Right ventricle myocardium superior (tissue), 1 donor: ENCODE measurements at regions of chr3 and their contacts with region 1.

Region 1: DNA sequence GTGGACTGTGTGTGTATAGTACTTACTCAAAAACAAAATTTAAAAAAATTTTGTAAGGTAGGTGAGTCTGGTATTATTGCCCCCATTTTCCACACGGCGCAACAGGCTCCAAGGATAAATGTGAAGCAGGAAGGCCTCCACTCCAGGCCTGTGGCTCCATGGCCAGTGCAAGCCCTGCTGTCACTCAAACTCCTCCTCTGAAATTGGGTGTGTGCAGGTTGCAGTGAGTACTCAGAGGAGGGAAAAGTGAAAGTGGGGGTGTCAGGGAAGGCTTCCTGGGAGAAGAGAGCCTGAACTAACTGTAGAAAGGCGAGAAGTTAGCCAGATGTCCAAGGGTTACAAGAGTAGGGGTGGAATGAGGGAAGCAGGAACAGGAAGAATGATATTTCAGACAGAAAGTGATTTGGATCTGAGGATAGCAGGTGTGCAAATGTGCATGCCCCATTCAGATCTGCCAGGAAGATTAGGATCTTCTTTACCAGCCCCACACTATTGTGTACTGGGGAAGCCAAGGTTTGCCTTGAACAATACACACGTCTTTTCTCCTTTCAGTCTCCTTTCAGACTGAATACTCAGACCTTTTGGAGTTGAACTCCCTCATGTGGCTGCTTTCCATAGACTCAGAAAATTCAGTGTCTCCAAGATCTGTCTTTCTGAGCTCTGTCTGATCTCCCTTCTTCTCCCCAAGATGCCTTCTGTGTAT is 48.7 kb upstream of the RYK start:
- DNase-seq: no peak
- ATAC-seq: peak; percentile 66

Region 2: GRCh38 chr3:134250717-134251220 is 48.6 kb before region 1 on chr3 and contains the start of gene RYK:
- intact Hi-C with region 1: loop called (anchors 5 kb)
- DNase-seq: peak; percentile 91
- ATAC-seq: peak; percentile 95
- total RNA-seq, gene RYK: 34.2 TPM